Activated T-helper 1 cell treated with anti-CD3 and anti-CD28 coated beads, Interleukin-12 subunit alpha, Interleukin-12 subunit beta, Interleukin-2, Interleukin-4 antibody, amounts not matched to agents 30 ng/mL and 10 ng/mL and 1 ng/mL, durations not matched to agents 14 hours and 24 hours and 36 hours (primary cell): ENCODE measurements at regions of chr11 and their contacts with region 1.

Region 1: GRCh38 chr11:112226062-112226830 is at the start of gene PTS:
- DNase-seq: peak; percentile 83
- H3K4me3 Mint-ChIP-seq: peak within 1 kb of the TSS; percentile 84
- H3K27ac Mint-ChIP-seq: peak within 1 kb of the TSS; percentile 91
- H3K4me1 Mint-ChIP-seq: peaks cover 29% of the 10 kb centered on the region
- H3K27me3 Mint-ChIP-seq: peaks cover 1% of the 10 kb centered on the region
- total RNA-seq, gene PTS: 28.9 and 35.0 TPM in 2 replicates

Region 2: DNA sequence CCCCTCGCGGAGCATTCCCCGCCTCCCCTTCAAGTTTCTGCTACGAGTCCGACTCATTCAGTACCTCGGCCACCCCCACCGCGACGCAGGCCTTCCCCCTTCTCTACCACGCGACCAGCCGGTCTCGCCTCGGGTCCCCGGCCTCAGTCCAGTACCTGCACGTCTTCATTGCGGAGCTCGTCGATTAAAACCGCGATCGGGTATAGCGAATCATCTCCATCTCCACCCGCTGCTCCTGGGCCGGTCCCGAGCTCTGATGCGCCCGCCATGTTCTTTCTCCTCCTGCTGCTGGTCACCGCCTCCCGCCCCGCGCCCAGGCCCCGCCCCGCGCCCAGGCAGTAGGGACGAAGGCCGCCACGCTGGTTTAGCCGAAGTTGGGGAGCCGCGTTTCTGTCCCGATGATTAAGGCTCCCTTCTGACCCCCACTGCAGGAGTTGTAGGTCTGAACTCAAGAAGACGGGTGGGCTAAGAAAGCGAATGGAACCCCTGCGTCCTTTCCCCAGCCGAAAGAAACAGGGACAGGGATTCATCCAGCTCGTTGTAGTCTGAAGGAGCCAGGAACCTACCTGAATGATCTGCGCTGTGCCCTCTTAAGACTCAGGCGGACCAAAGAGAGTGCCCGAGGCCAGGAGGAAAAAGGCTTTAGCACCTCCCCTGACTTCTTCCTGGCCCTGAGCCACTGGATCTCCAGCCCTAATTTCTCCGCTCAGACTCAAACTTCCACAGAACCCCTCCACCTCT is 460.0 kb before region 1 on chr11 and contains the start of gene PPP2R1B:
- intact Hi-C with region 1: loop called (anchors 2 kb)
- DNase-seq: peak; percentile 60
- H3K4me3 Mint-ChIP-seq: peak within 1 kb of the TSS; percentile 96
- H3K27ac Mint-ChIP-seq: peak within 1 kb of the TSS; percentile 97
- H3K4me1 Mint-ChIP-seq: peaks cover 43% of the 10 kb centered on the region
- H3K27me3 Mint-ChIP-seq: no peaks in the 10 kb centered on the region
- total RNA-seq, gene PPP2R1B: 58.1 and 61.4 TPM in 2 replicates

Region 3: DNA sequence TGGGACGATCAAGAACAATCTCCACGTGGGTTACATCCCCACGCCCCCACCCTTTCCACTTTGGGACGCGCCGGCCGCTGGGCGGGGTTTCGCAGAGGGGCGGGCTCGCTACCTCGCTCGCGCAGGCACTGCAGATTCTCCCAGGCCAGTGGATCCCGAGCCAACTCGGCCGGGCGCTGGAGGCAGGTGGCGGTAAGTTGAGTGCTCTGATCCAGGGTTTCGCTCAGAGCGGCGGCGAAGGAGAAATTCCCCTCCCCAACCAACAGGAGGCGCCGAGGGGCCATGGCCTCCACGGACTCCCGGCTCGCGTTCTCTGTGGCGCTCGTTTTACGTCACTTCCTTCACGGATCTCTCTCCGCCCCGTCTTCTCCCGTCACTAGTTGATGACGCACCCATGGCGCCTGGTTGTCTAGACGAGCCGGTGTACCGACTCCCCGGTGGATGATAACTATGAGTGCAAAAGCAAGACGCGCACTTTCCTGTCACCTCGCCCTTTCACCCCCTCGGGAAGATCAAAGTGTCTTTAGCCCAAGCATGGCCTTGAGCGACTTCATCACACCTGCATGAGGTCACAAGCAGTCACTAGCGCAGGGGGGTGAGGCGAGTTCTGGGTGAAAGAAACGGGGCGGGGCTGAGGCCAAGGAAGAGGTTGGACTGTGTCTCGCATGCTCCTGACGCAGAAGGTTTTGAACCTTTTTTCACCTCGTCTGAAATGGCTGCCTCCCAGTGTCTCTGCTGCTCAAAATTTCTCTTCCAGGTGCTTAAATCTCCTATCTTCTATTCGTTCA is 347.2 kb before region 1 on chr11 and contains the starts of genes CFAP68 and FDXACB1:
- intact Hi-C with region 1: loop called (anchors 1 kb)
- DNase-seq: peak; percentile 92
- H3K4me3 Mint-ChIP-seq: peak within 1 kb of the TSS; percentile 94
- H3K27ac Mint-ChIP-seq: peak within 1 kb of the TSS; percentile 100
- H3K4me1 Mint-ChIP-seq: peaks cover 26% of the 10 kb centered on the region
- H3K27me3 Mint-ChIP-seq: peaks cover 2% of the 10 kb centered on the region
- total RNA-seq, gene CFAP68: 17.7 and 22.3 TPM in 2 replicates
- total RNA-seq, gene FDXACB1: 7.9 and 9.4 TPM in 2 replicates

Region 4: GRCh38 chr11:112024773-112025678 is 201.2 kb before region 1 on chr11 and contains the start of gene DLAT:
- intact Hi-C with region 1: loop called (anchors 1 kb)
- DNase-seq: peak; percentile 80
- H3K4me3 Mint-ChIP-seq: peak within 1 kb of the TSS; percentile 95
- H3K27ac Mint-ChIP-seq: peak within 1 kb of the TSS; percentile 100
- H3K4me1 Mint-ChIP-seq: peaks cover 14% of the 10 kb centered on the region
- H3K27me3 Mint-ChIP-seq: no peaks in the 10 kb centered on the region
- total RNA-seq, gene DLAT: 52.0 and 54.5 TPM in 2 replicates

Region 5: DNA sequence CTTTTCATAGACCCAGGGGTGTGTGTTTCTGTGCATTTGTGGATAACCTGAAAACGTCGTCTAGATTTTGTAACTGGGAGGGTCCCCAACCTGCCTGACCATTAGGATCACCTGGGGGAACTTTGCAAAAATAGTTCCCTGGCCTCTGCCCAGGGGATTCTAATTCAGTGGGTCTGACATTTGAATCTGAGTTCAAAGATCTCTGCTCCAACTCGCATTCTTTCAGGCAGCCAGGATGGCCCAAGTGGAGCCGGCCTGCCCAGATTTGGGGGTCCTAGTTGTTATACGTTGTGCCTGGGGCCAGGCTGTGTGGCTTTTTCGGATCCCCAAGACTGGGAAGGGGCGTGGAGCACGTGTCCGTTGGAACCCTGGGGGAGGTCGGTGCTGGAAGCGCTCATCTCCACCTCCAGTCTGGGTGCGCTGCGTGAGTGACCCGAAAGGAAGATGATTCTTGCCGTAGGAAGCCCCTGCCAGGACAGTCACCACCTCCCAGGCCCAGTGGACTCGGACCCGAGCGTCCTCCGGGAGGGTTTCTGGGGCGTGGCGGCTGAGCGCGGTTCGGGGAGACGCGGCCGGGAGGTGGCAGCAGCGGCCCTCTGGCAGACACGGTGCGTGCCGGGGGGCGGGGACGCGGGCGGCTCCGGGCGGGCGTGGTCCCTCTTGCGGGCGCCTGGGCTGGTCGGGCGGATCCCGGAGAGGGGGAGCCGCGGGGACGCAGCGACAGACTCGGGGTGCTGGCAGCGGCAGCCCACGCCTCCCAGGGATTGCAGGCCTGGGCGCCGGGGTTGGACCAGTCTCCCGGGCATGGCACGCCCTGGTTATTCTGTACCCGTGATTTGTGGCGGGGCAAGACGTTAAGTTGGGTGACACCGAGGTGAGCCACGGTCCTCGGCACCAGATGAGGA is 63.6 kb after region 1 on chr11:
- intact Hi-C with region 1: loop called (anchors 2 kb)
- DNase-seq: peak; percentile 81
- H3K4me3 Mint-ChIP-seq: peak overlapping the region; percentile 78
- H3K27ac Mint-ChIP-seq: no peak overlapping the region
- H3K4me1 Mint-ChIP-seq: peaks cover 23% of the 10 kb centered on the region
- H3K27me3 Mint-ChIP-seq: peaks cover 6% of the 10 kb centered on the region